Upper lobe of right lung (tissue), 1 donor: ENCODE measurements at regions of chr5 and their contacts with region 1.

Region 1: GRCh38 chr5:142769741-142770631 is at the start of gene ARHGAP26:
- DNase-seq: peak; percentile 99
- ATAC-seq: peak; percentile 98
- H3K4me3 ChIP-seq: peak within 1 kb of the TSS; percentile 96
- H3K27ac ChIP-seq: peak within 1 kb of the TSS; percentile 82
- H3K4me1 ChIP-seq: peaks cover 21% of the 10 kb centered on the region
- H3K27me3 ChIP-seq: no peaks in the 10 kb centered on the region
- CTCF ChIP-seq: peak; percentile 41
- total RNA-seq, gene ARHGAP26: 35.4 TPM

Region 2: DNA sequence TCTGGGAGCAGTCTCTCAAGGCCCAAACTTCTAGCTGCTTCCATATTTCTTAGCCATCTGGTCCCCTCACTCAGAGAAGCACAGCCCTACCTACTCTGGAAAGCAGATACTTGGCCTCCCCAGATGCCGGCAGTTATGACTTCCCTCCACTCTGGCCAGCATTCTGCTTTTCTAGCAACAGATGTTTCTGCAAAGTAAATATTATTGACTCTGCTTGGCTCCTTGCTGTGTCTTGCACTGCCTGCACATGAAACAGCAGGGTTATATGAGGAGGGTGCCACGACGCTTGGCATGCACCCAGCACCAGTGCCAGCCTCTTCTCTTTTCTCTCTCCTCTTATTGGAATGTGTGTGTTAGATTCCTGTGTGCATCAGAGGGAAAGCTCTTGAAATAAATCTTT is 99.9 kb after region 1 on chr5:
- intact Hi-C with region 1: loop called (anchors 10 kb)
- DNase-seq: no peak
- ATAC-seq: no peak
- H3K4me3 ChIP-seq: no peak overlapping the region
- H3K27ac ChIP-seq: no peak overlapping the region
- H3K4me1 ChIP-seq: peaks cover 37% of the 10 kb centered on the region
- H3K27me3 ChIP-seq: no peaks in the 10 kb centered on the region
- CTCF ChIP-seq: no peak

Region 3: GRCh38 chr5:143106174-143106573 is 336.2 kb after region 1 on chr5:
- intact Hi-C with region 1: no loop called
- DNase-seq: no peak
- ATAC-seq: peak; percentile 75
- H3K4me3 ChIP-seq: no peak overlapping the region
- H3K27ac ChIP-seq: no peak overlapping the region
- H3K4me1 ChIP-seq: peaks cover 31% of the 10 kb centered on the region
- H3K27me3 ChIP-seq: no peaks in the 10 kb centered on the region
- CTCF ChIP-seq: peak; percentile 30